Caco-2 (cell line): ENCODE measurements at regions of chr3 and their contacts with region 1.

Region 1: GRCh38 chr3:125916376-125916978 is 52.5 kb upstream of the ROPN1B start:
- DNase-seq: peak in 1 of 2 experiments; percentile 97
- H3K4me3 ChIP-seq: peak overlapping the region; percentile 82
- H3K4me3 Mint-ChIP-seq: peak overlapping the region; percentile 69
- H3K27ac Mint-ChIP-seq: peak overlapping the region; percentile 73
- H3K4me1 ChIP-seq: no peaks in the 10 kb centered on the region
- H3K4me1 Mint-ChIP-seq: no peaks in the 10 kb centered on the region
- H3K27me3 ChIP-seq: no peaks in the 10 kb centered on the region
- H3K27me3 Mint-ChIP-seq: no peaks in the 10 kb centered on the region
- CTCF ChIP-seq: peak in 1 of 2 experiments; percentile 30

Region 2: DNA sequence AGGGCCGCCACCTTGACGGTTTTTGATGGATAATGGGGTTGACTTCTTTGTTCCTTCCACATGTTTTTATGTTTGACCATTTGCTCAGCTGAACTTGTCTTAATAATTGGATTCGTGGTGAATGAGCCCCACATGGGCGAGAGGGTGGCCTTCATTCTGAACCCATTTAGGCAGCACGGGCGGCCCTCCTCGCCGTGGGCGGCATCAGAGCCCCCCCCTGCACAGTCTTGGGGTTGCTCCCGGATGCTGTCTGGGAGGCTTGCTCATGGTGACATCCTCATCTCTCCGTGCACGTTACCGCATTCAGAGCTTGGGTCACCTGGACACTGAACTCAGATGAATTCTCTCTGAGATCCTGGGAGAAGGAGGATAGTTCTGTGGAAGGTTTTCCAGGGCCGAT is 148.8 kb before region 1 on chr3:
- CTCF ChIA-PET with region 1: interaction called, 3 read pairs
- POLR2A ChIA-PET with region 1: no interaction called
- intact Hi-C with region 1: loop called (anchors 5 kb)
- DNase-seq: no peak
- H3K4me3 ChIP-seq: no peak overlapping the region
- H3K4me3 Mint-ChIP-seq: peak overlapping the region; percentile 83
- H3K27ac Mint-ChIP-seq: no peak overlapping the region
- H3K4me1 ChIP-seq: no peaks in the 10 kb centered on the region
- H3K4me1 Mint-ChIP-seq: no peaks in the 10 kb centered on the region
- H3K27me3 ChIP-seq: no peaks in the 10 kb centered on the region
- H3K27me3 Mint-ChIP-seq: no peaks in the 10 kb centered on the region
- CTCF ChIP-seq: no peak